Left cardiac atrium (tissue), 4 donors: ENCODE measurements at regions of chr14 and their contacts with region 1.

Region 1: GRCh38 chr14:69611201-69612011 is at the start of gene SUSD6:
- DNase-seq: peak; percentile 92
- ATAC-seq: peak; percentile 91 to 92
- total RNA-seq, gene SUSD6: 21.8 to 28.1 TPM

Region 2: GRCh38 chr14:69652942-69653684 is 41.7 kb after region 1 on chr14:
- intact Hi-C with region 1: loop called in 1 of 2 experiments (anchors 5 kb)
- DNase-seq: no peak
- ATAC-seq: peak; percentile 12 to 38